T-cell (primary cell): ENCODE measurements at regions of chr9 and their contacts with region 1.

Region 1: DNA sequence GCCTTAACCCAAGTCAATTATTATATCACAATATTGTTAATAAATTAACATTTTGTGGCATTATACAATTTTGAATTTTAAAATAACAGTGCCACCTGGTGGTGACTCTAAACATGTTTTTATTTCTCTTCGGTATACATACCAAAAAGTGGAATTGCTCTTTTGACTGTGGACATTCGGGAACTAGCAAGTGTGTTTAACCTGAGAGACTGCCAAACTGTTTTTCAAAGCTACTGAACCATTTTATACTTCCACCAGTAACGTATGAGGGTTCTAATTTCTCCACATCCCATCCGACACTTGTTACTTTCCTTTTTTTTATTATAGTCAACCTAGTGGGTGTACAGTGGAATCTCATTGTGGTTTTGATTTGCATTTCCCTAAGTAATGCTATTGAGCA is 18.3 kb upstream of the HSDL2 start:
- DNase-seq: peak in 5 of 35 experiments; percentile 9 to 74 (median 21)
- ATAC-seq: peak in 1 of 4 experiments; percentile 46
- H3K4me3 ChIP-seq: no peak overlapping the region
- H3K4me3 Mint-ChIP-seq: no peak overlapping the region
- H3K27ac ChIP-seq: no peak overlapping the region
- H3K27ac Mint-ChIP-seq: no peak overlapping the region
- H3K4me1 ChIP-seq: no peaks in the 10 kb centered on the region
- H3K4me1 Mint-ChIP-seq: peaks cover 0 to 3% (median 0%) of the 10 kb centered on the region in 3 donors
- H3K27me3 ChIP-seq: peaks cover 0 to 10% of the 10 kb centered on the region in 2 experiments
- H3K27me3 Mint-ChIP-seq: peaks cover 5 to 10% of the 10 kb centered on the region in 2 donors

Region 2: GRCh38 chr9:112097712-112098688 is 263.6 kb before region 1 on chr9:
- CTCF ChIA-PET with region 1: interaction called, 3 to 26 read pairs
- POLR2A ChIA-PET with region 1: no interaction called
- DNase-seq: peak; percentile 28 to 87 (median 55)
- ATAC-seq: peak; percentile 71 to 82 (median 79)
- H3K4me3 ChIP-seq: no peak overlapping the region
- H3K4me3 Mint-ChIP-seq: no peak overlapping the region
- H3K27ac ChIP-seq: no peak overlapping the region
- H3K27ac Mint-ChIP-seq: no peak overlapping the region
- H3K4me1 ChIP-seq: peaks cover 0 to 17% of the 10 kb centered on the region in 2 experiments
- H3K4me1 Mint-ChIP-seq: peaks cover 11 to 31% (median 23%) of the 10 kb centered on the region in 3 donors
- H3K27me3 ChIP-seq: no peaks in the 10 kb centered on the region
- H3K27me3 Mint-ChIP-seq: no peaks in the 10 kb centered on the region

Region 3: GRCh38 chr9:112112941-112113681 is 248.5 kb before region 1 on chr9:
- CTCF ChIA-PET with region 1: interaction called, 10 to 20 read pairs
- POLR2A ChIA-PET with region 1: no interaction called
- DNase-seq: peak in 15 of 35 experiments; percentile 1 to 50 (median 7)
- ATAC-seq: peak in 3 of 4 experiments; percentile 37 to 59 (median 47)
- H3K4me3 ChIP-seq: no peak overlapping the region
- H3K4me3 Mint-ChIP-seq: no peak overlapping the region
- H3K27ac ChIP-seq: no peak overlapping the region
- H3K27ac Mint-ChIP-seq: no peak overlapping the region
- H3K4me1 ChIP-seq: no peaks in the 10 kb centered on the region
- H3K4me1 Mint-ChIP-seq: peaks cover 0 to 3% (median 0%) of the 10 kb centered on the region in 3 donors
- H3K27me3 ChIP-seq: no peaks in the 10 kb centered on the region
- H3K27me3 Mint-ChIP-seq: no peaks in the 10 kb centered on the region

Region 4: GRCh38 chr9:112295174-112295573 is 66.4 kb before region 1 on chr9:
- CTCF ChIA-PET with region 1: interaction called in 1 of 2 experiments, 11 read pairs
- POLR2A ChIA-PET with region 1: no interaction called
- DNase-seq: no peak
- ATAC-seq: no peak
- H3K4me3 ChIP-seq: no peak overlapping the region
- H3K4me3 Mint-ChIP-seq: no peak overlapping the region
- H3K27ac ChIP-seq: no peak overlapping the region
- H3K27ac Mint-ChIP-seq: no peak overlapping the region
- H3K4me1 ChIP-seq: peaks cover 0 to 3% of the 10 kb centered on the region in 2 experiments
- H3K4me1 Mint-ChIP-seq: peaks cover 56 to 68% (median 58%) of the 10 kb centered on the region in 3 donors
- H3K27me3 ChIP-seq: no peaks in the 10 kb centered on the region
- H3K27me3 Mint-ChIP-seq: no peaks in the 10 kb centered on the region

Region 5: GRCh38 chr9:112379177-112380101 is 17.8 kb after region 1 on chr9:
- CTCF ChIA-PET with region 1: interaction called, 3 to 10 read pairs
- POLR2A ChIA-PET with region 1: no interaction called
- DNase-seq: peak; percentile 90 to 99 (median 96)
- ATAC-seq: peak; percentile 94 to 95 (median 95)
- H3K4me3 ChIP-seq: peak overlapping the region; percentile 83 to 86
- H3K4me3 Mint-ChIP-seq: peak overlapping the region; percentile 99 to 100 (median 99)
- H3K27ac ChIP-seq: peak overlapping the region; percentile 82
- H3K27ac Mint-ChIP-seq: peak overlapping the region; percentile 97 to 98
- H3K4me1 ChIP-seq: peaks cover 10 to 17% of the 10 kb centered on the region in 2 experiments
- H3K4me1 Mint-ChIP-seq: peaks cover 40 to 60% (median 49%) of the 10 kb centered on the region in 3 donors
- H3K27me3 ChIP-seq: no peaks in the 10 kb centered on the region
- H3K27me3 Mint-ChIP-seq: no peaks in the 10 kb centered on the region